GM13977 (cell line): ENCODE measurements at regions of chr6 and their contacts with region 1.

Region 1: DNA sequence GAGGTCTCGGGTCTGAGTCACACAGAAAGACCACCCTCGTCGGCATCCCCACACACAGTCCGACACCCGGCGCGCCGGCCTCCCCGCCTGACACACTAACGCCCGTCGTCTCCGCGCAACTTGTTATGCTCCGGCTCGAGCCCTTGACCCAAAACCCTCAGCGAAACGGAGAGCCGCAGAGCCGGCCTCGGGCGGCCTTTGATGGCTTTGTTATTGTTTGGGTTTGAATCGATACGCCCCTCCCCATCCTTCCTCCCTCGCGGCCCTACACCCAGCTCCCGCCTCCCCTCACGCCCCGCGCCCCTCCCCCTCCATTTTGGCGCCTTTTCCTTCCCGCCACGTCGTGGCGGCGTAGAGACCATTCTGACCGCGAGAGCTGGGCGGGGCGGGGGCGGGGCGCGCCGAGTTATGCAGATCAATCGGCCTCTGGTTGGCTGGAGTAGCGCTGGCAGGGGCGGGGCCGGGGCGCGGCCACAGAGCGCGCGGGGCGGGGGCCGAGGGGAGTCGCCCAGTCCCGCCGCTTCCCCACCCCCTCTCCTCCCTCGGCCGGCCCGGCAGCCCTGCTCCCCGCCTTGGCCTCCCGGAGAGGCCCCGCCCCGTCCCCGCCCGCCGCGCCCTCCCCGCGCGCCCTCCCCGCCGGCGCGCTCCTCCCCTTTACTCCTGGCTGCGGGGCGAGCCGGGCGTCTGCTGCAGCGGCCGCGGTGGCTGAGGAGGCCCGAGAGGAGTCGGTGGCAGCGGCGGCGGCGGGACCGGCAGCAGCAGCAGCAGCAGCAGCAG is at the start of gene PIM1:
- DNase-seq: peak; percentile 99
- CTCF ChIP-seq: no peak

Region 2: DNA sequence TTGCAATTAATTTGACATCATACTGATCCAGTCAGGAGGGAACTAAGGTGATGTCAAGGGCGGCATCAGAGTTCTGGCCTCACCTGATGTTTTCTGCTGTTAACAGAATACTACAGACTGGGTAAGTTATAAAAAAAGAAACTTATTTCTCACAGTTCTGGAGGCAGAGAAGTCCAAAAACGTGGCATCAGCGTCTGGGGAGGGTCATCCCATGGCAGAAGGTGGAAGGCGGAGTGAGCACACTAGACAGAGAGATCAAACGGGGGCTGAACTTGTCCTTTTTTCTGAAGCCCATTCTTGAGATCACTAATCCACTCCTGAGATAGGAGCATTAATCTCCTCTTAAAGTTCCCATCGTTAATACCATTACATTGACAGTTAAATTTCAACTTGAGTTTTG is 180.4 kb before region 1 on chr6:
- in situ Hi-C with region 1: no loop called
- DNase-seq: no peak
- CTCF ChIP-seq: no peak

Region 3: GRCh38 chr6:37018198-37019064 is 151.3 kb before region 1 on chr6:
- in situ Hi-C with region 1: loop called (anchors 5 kb)
- DNase-seq: peak; percentile 91
- CTCF ChIP-seq: peak; percentile 93

Region 4: GRCh38 chr6:37051138-37052026 is 118.3 kb before region 1 on chr6:
- in situ Hi-C with region 1: loop called (anchors 10 kb)
- DNase-seq: peak; percentile 84
- CTCF ChIP-seq: peak; percentile 93

Region 5: DNA sequence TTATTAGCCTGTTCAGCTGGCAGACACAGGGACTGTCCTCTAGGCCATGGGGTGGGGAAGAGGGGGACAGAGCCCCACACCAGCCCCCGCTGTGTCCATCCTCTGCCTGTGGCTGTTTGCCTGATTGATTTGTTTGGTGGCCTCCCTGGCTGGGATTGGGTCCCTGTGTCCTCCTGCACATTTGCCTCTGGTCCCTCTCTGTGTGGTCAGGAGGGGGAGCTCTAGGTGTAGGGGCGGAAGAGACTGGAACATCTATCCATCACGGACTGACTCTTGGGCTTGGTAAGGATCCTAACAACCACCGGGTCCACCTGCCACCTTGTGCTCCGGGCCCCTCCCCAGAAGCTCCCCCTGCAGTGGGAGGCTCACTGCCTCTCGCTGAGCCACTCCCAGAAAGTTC is 368.4 kb after region 1 on chr6:
- in situ Hi-C with region 1: no loop called
- DNase-seq: peak; percentile 58
- CTCF ChIP-seq: peak; percentile 71

Region 6: GRCh38 chr6:38350942-38351341 is 1181.3 kb after region 1 on chr6:
- in situ Hi-C with region 1: no loop called
- DNase-seq: no peak
- CTCF ChIP-seq: no peak